Caco-2 (cell line): ENCODE measurements at regions of chr4 and their contacts with region 1.

Region 1: GRCh38 chr4:19195696-19196095 is 1056.0 kb upstream of the SLIT2 start:
- DNase-seq: no peak
- H3K4me3 ChIP-seq: no peak overlapping the region
- H3K4me3 Mint-ChIP-seq: no peak overlapping the region
- H3K27ac Mint-ChIP-seq: peak overlapping the region; percentile 76
- H3K4me1 ChIP-seq: peaks cover 37% of the 10 kb centered on the region
- H3K4me1 Mint-ChIP-seq: peaks cover 28% of the 10 kb centered on the region
- H3K27me3 ChIP-seq: no peaks in the 10 kb centered on the region
- H3K27me3 Mint-ChIP-seq: no peaks in the 10 kb centered on the region
- CTCF ChIP-seq: no peak

Region 2: GRCh38 chr4:19026281-19026680 is 169.4 kb before region 1 on chr4:
- CTCF ChIA-PET with region 1: no interaction called
- POLR2A ChIA-PET with region 1: no interaction called
- intact Hi-C with region 1: loop called (anchors 10 kb)
- DNase-seq: no peak
- H3K4me3 ChIP-seq: no peak overlapping the region
- H3K4me3 Mint-ChIP-seq: no peak overlapping the region
- H3K27ac Mint-ChIP-seq: no peak overlapping the region
- H3K4me1 ChIP-seq: peaks cover 26% of the 10 kb centered on the region
- H3K4me1 Mint-ChIP-seq: peaks cover 15% of the 10 kb centered on the region
- H3K27me3 ChIP-seq: no peaks in the 10 kb centered on the region
- H3K27me3 Mint-ChIP-seq: no peaks in the 10 kb centered on the region
- CTCF ChIP-seq: no peak

Region 3: DNA sequence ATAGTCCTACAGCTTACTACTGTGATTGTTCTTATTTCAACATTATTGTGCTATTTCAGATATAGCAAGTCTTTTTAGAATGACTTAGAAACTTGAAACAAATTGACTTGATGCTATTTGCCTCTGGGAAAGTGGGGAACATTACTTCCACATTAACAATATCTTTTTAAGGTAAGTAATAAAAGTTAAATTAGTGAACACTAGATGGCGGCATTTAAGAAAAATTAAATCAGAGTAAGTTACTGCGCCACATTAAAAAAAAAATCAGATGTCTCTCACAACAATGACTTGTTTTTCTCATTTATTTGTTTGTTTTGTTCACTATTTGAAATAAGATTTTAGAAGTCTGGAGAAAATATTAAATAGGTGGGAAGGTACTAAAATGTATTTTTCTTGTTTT is 29.1 kb after region 1 on chr4:
- CTCF ChIA-PET with region 1: no interaction called
- POLR2A ChIA-PET with region 1: no interaction called
- intact Hi-C with region 1: no loop called
- DNase-seq: no peak
- H3K4me3 ChIP-seq: no peak overlapping the region
- H3K4me3 Mint-ChIP-seq: no peak overlapping the region
- H3K27ac Mint-ChIP-seq: no peak overlapping the region
- H3K4me1 ChIP-seq: no peaks in the 10 kb centered on the region
- H3K4me1 Mint-ChIP-seq: no peaks in the 10 kb centered on the region
- H3K27me3 ChIP-seq: no peaks in the 10 kb centered on the region
- H3K27me3 Mint-ChIP-seq: no peaks in the 10 kb centered on the region
- CTCF ChIP-seq: no peak